Activated CD4-positive, alpha-beta T cell treated with anti-CD3 and anti-CD28 coated beads for 36 hours (primary cell): ENCODE measurements at regions of chr1 and their contacts with region 1.

Region 1: GRCh38 chr1:44652445-44653106 is 21.7 kb downstream of the TMEM53 start:
- DNase-seq: peak; percentile 86
- ATAC-seq: peak; percentile 94
- H3K4me3 Mint-ChIP-seq: no peak overlapping the region
- H3K27ac Mint-ChIP-seq: no peak overlapping the region
- H3K4me1 Mint-ChIP-seq: no peaks in the 10 kb centered on the region
- H3K27me3 Mint-ChIP-seq: no peaks in the 10 kb centered on the region

Region 2: DNA sequence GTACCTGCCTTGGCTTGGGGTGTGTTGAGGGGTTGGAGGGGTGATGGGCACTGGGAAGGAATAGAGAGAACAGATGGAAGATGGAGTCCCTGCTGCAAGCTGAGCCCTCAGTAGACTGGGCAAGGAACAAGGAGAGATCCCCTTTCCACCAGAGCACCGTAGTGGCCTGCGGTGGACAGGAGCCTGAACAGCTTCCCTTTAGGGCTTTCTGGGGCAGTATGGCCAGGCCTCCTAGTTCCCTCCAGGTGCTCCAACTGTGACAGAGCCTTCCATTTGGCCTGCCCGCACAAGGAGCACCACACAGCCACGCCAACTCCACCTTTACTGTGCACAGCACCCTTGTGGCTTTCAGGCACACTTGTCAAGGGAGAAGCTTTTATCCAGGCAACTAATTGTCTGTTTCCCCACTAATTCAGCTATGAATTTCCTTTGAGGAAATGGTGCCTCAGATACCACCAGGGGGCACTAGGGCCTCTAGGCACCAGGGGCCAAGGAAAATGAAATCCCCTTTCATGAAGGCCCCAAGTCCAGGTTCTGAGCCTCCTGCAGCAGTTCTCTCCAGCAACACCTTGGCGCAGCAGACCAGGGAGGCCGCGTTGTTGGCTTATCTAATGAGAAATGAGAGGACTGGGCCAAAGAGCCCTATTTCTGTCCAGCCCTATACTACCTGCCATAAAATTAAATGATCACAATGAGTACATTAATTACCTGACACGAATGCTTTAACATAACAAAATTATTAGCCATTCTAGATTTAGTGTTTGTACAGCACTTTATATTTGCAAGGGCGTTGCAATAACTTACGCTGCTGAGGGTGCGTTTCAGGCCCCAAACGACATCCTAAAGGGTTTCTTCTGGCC is 274.4 kb before region 1 on chr1:
- CTCF ChIA-PET with region 1: interaction called, 5 read pairs
- POLR2A ChIA-PET with region 1: no interaction called
- intact Hi-C with region 1: loop called (anchors 1 kb)
- DNase-seq: peak; percentile 68
- ATAC-seq: no peak
- H3K4me3 Mint-ChIP-seq: no peak overlapping the region
- H3K27ac Mint-ChIP-seq: no peak overlapping the region
- H3K4me1 Mint-ChIP-seq: no peaks in the 10 kb centered on the region
- H3K27me3 Mint-ChIP-seq: no peaks in the 10 kb centered on the region

Region 3: DNA sequence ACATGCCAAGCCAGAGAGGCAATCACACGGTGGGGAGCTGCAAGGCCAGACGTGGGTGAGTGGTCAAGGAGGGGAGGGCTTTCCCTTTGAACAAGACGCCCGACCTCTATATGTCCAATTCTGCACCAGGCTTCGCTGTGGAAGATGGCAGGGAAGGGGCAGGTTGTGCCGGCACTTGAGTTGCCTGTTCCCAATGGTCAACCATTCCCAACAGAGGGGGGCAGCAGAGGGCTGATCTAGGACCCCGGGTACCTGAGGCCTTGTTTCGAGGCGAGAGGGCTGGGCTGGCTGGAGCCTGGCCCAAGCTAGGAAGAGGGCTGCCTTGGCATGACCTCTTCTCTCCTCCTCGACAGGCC is 43.2 kb before region 1 on chr1:
- CTCF ChIA-PET with region 1: interaction called, 23 read pairs
- POLR2A ChIA-PET with region 1: no interaction called
- intact Hi-C with region 1: loop called (anchors 1 to 2 kb)
- DNase-seq: peak; percentile 57
- ATAC-seq: no peak
- H3K4me3 Mint-ChIP-seq: no peak overlapping the region
- H3K27ac Mint-ChIP-seq: no peak overlapping the region
- H3K4me1 Mint-ChIP-seq: no peaks in the 10 kb centered on the region
- H3K27me3 Mint-ChIP-seq: no peaks in the 10 kb centered on the region

Region 4: DNA sequence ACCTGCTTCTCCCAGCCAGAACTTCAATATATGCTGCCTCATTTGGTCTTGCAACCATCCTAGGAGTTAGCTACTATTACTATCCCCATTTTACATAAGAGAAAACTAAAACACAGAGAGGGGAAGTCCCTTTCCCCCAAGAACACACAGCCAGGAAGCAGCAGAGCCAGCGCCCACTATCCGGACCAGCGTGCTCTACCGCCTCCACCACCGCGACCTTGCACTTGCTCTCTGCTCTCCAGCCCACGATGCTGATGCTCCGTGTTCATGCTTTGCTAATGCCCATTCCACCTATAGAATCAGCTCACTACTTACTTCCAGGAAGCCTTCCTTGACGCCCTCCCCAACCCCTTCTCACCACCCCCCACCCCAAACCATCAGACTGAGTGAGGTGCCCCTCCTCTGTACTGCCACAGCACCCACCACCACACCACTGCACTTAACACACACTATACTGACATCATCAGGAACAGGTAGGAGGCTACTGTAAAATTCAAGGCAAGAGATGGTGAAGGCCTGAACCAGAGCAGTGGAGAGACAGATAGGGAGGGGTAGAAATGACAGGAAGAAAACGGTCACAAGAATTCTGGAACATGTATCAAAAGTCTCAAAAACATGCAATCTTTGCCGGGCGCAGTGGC is 12.3 kb after region 1 on chr1:
- CTCF ChIA-PET with region 1: interaction called, 23 read pairs
- POLR2A ChIA-PET with region 1: interaction called, 5 read pairs
- intact Hi-C with region 1: no loop called
- DNase-seq: peak; percentile 62
- ATAC-seq: peak; percentile 90
- H3K4me3 Mint-ChIP-seq: peak overlapping the region; percentile 5
- H3K27ac Mint-ChIP-seq: peak overlapping the region; percentile 29
- H3K4me1 Mint-ChIP-seq: peaks cover 15% of the 10 kb centered on the region
- H3K27me3 Mint-ChIP-seq: no peaks in the 10 kb centered on the region

Region 5: DNA sequence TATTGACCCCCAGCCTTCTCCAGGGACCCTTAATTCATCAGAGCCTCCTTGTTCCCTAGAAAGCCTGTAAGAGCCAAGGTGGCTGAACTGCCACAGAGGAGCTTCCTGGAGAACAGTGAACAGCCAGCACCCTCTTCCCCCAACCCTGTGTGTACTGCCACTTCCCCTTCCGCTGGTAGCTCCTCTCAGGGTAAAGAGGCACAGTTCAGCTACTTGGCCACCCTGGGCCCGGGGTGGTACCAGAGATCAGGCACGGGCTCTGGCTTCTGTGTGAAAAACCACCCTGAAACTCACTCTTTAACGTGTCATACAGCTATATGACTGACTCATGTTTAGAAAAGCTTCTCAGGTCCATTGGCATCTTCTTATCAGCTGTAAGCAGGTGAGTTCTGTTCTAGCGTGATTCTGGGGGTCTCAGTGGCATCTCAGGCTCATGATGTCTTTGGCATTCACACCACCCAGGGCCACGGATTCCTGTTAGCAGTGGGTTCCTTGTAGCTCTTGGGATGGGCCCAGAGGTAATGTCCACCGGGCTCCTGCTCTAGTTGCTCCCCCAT is 44.3 kb after region 1 on chr1:
- CTCF ChIA-PET with region 1: interaction called, 14 read pairs
- POLR2A ChIA-PET with region 1: no interaction called
- intact Hi-C with region 1: no loop called
- DNase-seq: peak; percentile 71
- ATAC-seq: peak; percentile 91
- H3K4me3 Mint-ChIP-seq: no peak overlapping the region
- H3K27ac Mint-ChIP-seq: peak overlapping the region; percentile 77
- H3K4me1 Mint-ChIP-seq: peaks cover 28% of the 10 kb centered on the region
- H3K27me3 Mint-ChIP-seq: no peaks in the 10 kb centered on the region